ENCODE measurements at regions of chr3 and their contacts with region 1.

Region 1: DNA sequence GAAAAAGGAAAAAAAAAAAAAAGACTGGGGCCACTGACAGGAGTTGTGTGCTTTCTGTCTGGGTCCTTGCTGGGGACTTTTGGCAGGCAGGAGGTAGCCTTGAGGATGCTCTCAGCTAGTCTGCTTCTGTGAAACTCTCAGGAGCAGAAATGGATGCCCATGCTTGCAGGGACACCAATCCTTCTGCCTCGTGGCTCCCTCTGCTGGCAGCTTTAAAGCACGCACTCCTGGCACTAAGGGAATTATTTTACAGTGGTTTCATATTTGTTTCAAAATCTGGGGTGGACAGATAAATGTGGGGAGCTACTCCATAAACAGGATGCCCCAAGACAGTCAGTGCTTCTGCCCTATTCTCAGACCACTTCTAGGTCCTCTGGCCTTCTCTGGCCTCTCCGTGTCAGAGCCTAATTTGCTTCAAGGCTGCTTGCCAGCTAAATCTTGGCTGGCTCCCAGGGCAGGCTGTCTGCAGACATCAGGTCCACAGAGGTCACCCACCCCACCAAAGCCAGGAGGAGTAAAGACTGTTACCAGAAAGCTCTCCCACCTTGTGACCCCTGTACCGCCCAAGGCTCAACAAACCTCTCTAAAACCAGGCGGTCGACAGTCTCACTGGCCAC is 17.1 kb downstream of the TRAIP start:
- DNase-seq: peak; percentile 92
- ATAC-seq: peak; percentile 91

Region 2: GRCh38 chr3:49802719-49803464 is 36.4 kb before region 1 on chr3 and contains the start of gene INKA1:
- intact Hi-C with region 1: loop called (anchors 1 kb)
- DNase-seq: peak; percentile 95
- ATAC-seq: peak; percentile 85
- total RNA-seq, gene INKA1: 7.3 TPM

Measured in sciatic nerve (tissue), 2 donors.